ENCODE measurements at regions of chr18 and their contacts with region 1.

Region 1: GRCh38 chr18:10006311-10006893 is 92.6 kb downstream of the VAPA start:
- DNase-seq: peak; percentile 62 to 79 (median 77)
- H3K4me3 ChIP-seq: no peak overlapping the region
- H3K4me3 Mint-ChIP-seq: no peak overlapping the region
- H3K27ac ChIP-seq: peak overlapping the region; percentile 54 to 83
- H3K27ac Mint-ChIP-seq: peak overlapping the region; percentile 86 to 96 (median 94)
- H3K4me1 ChIP-seq: peaks cover 47 to 57% of the 10 kb centered on the region in 2 donors
- H3K4me1 Mint-ChIP-seq: peaks cover 56% of the 10 kb centered on the region
- H3K27me3 ChIP-seq: no peaks in the 10 kb centered on the region
- H3K27me3 Mint-ChIP-seq: peaks cover 0 to 2% (median 1%) of the 10 kb centered on the region in 3 donors
- CTCF ChIP-seq: no peak

Region 2: DNA sequence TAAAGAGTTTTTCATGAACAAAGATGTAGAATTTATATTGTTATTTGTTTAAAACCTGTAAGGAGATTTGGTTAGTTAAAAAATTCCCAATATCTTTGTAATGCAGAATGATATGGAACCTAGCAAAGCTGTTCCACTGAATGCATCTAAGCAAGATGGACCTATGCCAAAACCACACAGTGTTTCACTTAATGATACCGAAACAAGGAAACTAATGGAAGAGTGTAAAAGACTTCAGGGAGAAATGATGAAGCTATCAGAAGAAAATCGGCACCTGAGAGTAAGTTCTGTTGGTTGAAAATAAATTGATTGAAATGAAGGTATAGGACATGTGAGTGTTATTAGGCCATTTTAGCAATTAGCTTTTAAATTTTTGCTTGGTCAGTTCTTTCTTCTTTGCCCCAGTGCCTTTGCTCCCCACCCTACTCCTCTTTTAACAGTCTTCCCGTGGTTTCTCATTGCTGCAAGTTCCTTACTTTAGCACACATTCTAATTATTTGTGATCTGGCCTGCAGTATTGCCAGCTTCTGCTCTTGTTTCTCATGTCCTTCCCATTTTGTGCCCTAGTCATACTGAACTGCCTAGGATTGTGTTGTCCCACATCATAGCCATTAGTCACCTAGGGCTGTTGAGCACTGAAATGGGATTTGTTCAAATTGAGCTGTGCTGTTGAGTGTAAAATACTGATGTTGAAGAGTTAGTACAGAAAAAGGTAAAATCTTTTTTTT is 55.9 kb before region 1 on chr18:
- intact Hi-C with region 1: no loop called
- DNase-seq: peak in 2 of 3 donors; percentile 30 to 58
- H3K4me3 ChIP-seq: no peak overlapping the region
- H3K4me3 Mint-ChIP-seq: no peak overlapping the region
- H3K27ac ChIP-seq: peak overlapping the region in 1 of 2 donors; percentile 37
- H3K27ac Mint-ChIP-seq: peak overlapping the region; percentile 31 to 71 (median 53)
- H3K4me1 ChIP-seq: peaks cover 8 to 12% of the 10 kb centered on the region in 2 donors
- H3K4me1 Mint-ChIP-seq: peaks cover 18% of the 10 kb centered on the region
- H3K27me3 ChIP-seq: no peaks in the 10 kb centered on the region
- H3K27me3 Mint-ChIP-seq: peaks cover 0 to 2% (median 0%) of the 10 kb centered on the region in 3 donors
- CTCF ChIP-seq: no peak

Region 3: DNA sequence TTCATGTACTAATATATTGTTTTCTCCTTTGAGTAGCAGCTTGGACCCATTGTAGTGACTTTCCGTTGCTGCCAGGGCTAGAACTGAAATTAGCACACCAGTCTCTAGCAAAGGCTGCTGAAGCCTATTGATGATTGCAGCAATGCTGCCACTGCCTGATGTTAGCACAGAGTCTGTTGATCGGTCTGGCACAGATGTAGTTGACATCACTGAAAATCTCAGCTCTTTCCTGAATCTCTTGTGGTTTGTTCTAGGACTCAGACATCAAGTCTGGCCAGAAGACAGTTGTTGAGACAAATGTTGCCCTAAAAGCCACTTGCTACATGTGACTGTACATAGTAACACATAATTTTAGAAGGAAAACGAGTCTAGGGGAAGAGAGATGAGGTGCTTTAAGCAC is 45.4 kb before region 1 on chr18:
- intact Hi-C with region 1: no loop called
- DNase-seq: no peak
- H3K4me3 ChIP-seq: no peak overlapping the region
- H3K4me3 Mint-ChIP-seq: no peak overlapping the region
- H3K27ac ChIP-seq: no peak overlapping the region
- H3K27ac Mint-ChIP-seq: no peak overlapping the region
- H3K4me1 ChIP-seq: peaks cover 4% of the 10 kb centered on the region in 2 donors
- H3K4me1 Mint-ChIP-seq: peaks cover 10% of the 10 kb centered on the region
- H3K27me3 ChIP-seq: peaks cover 0 to 7% of the 10 kb centered on the region in 2 donors
- H3K27me3 Mint-ChIP-seq: peaks cover 7 to 11% (median 10%) of the 10 kb centered on the region in 3 donors
- CTCF ChIP-seq: no peak

Region 4: DNA sequence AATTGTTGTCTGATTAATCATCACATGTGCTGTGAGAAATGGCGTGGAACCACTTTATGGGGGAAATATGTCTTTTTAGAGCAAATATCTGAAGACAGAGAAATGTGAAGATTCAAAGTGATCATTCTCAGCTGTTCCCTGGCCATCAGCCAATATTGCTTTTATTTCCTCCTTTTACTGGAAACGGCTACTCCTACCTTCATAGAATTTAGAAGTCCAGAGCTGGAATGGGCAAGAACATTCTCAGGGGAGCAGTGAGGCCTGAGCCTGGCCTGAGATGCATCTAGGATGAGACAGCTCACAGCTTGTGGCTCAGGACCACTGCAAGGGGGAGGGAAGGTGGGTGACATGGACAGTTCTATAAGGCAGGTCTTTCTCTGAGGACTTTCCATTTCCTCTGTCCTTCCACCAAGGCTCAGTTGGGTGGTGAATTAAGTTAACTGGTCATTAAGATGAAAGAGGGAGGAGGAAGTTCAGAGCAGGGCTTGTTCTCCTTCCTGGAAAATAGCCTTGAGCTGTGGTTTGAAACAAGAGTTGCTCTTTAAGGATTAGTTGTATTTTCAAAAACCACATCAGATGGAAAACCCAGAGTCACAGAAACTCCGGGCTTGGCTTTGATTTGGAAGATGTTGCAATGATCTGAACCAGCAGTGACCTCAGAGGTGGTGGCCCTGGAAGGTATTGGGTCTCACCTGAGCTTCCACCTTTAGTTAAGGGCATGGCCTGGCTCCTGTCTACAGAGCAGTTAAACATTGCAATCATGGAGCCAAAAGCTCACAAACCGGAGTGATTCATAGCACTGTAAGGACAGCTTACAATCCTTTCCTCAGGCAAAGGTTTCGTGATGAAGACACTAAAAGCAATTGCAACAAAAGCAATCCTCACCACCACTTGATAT is 51.7 kb after region 1 on chr18:
- intact Hi-C with region 1: loop called in 1 of 2 experiments (anchors 10 kb)
- DNase-seq: peak; percentile 69 to 85 (median 83)
- H3K4me3 ChIP-seq: peak overlapping the region in 1 of 3 experiments; percentile 47
- H3K4me3 Mint-ChIP-seq: peak overlapping the region; percentile 16 to 81
- H3K27ac ChIP-seq: peak overlapping the region; percentile 94 to 95
- H3K27ac Mint-ChIP-seq: peak overlapping the region; percentile 94 to 99 (median 98)
- H3K4me1 ChIP-seq: peaks cover 69 to 70% of the 10 kb centered on the region in 2 donors
- H3K4me1 Mint-ChIP-seq: peaks cover 69% of the 10 kb centered on the region
- H3K27me3 ChIP-seq: no peaks in the 10 kb centered on the region
- H3K27me3 Mint-ChIP-seq: peaks cover 0 to 2% (median 2%) of the 10 kb centered on the region in 3 donors
- CTCF ChIP-seq: no peak

Measured in CD14-positive monocyte (primary cell).